ENCODE measurements at regions of chr2 and their contacts with region 1.

Region 1: GRCh38 chr2:132853128-132853527 is 183.1 kb upstream of the LYPD1 start:
- DNase-seq: no peak
- H3K4me3 ChIP-seq: no peak overlapping the region
- H3K27ac ChIP-seq: no peak overlapping the region
- H3K4me1 ChIP-seq: no peaks in the 10 kb centered on the region
- H3K27me3 ChIP-seq: no peaks in the 10 kb centered on the region
- CTCF ChIP-seq: no peak
- EP300 ChIP-seq: no peak
- POLR2A ChIP-seq: no peak

Region 2: GRCh38 chr2:132605236-132606180 is 247.6 kb before region 1 on chr2:
- in situ Hi-C with region 1: no loop called
- intact Hi-C with region 1: loop called (anchors 2 kb)
- DNase-seq: no peak
- H3K4me3 ChIP-seq: no peak overlapping the region
- H3K27ac ChIP-seq: no peak overlapping the region
- H3K4me1 ChIP-seq: no peaks in the 10 kb centered on the region
- H3K27me3 ChIP-seq: no peaks in the 10 kb centered on the region
- CTCF ChIP-seq: no peak
- EP300 ChIP-seq: no peak
- POLR2A ChIP-seq: no peak

Region 3: GRCh38 chr2:132871831-132872230 is 18.7 kb after region 1 on chr2:
- in situ Hi-C with region 1: no loop called
- intact Hi-C with region 1: loop called (anchors 1 kb)
- DNase-seq: no peak
- H3K4me3 ChIP-seq: no peak overlapping the region
- H3K27ac ChIP-seq: no peak overlapping the region
- H3K4me1 ChIP-seq: no peaks in the 10 kb centered on the region
- H3K27me3 ChIP-seq: no peaks in the 10 kb centered on the region
- CTCF ChIP-seq: no peak
- EP300 ChIP-seq: no peak
- POLR2A ChIP-seq: no peak

Region 4: DNA sequence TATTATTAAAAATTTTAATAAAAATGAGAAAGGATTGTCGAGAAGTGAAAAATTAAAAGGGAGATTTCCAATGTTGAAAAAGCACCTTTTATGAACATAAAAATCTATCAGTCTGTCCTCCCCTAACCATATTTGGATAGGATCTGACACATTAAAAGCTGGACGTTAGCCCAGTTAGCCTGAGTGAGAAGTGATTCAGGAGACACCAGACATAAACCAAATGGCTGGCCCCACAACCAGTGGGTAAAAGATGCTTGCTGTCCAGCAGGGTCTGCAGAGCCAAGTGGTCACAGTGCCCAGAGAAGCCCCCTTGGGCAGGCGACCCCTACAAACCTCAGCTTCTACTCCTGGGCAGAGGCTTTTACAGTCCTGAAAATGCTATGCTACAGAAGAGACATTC is 70.7 kb after region 1 on chr2:
- in situ Hi-C with region 1: no loop called
- intact Hi-C with region 1: no loop called
- DNase-seq: no peak
- H3K4me3 ChIP-seq: no peak overlapping the region
- H3K27ac ChIP-seq: no peak overlapping the region
- H3K4me1 ChIP-seq: no peaks in the 10 kb centered on the region
- H3K27me3 ChIP-seq: no peaks in the 10 kb centered on the region
- CTCF ChIP-seq: no peak
- EP300 ChIP-seq: no peak
- POLR2A ChIP-seq: no peak

Region 5: DNA sequence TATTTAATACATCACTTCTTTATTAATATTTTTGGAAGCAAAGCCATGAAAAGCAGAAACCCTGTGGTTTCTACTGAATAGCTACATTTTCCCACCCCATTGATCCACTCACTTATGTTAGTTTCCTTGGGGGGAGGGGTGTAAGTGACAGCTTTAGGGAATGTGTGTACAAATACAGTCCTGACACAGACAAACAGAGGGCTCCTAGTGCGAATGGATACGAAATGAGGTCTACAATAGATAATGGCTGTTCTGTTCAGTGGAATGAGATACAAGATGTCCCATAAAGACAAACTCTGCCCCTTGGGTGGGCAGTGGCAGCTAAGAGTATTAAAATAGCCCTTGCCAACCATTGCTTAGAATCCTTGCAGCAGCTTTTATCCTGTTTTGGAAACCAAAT is 402.2 kb after region 1 on chr2:
- in situ Hi-C with region 1: no loop called
- intact Hi-C with region 1: no loop called
- DNase-seq: no peak
- H3K4me3 ChIP-seq: no peak overlapping the region
- H3K27ac ChIP-seq: no peak overlapping the region
- H3K4me1 ChIP-seq: no peaks in the 10 kb centered on the region
- H3K27me3 ChIP-seq: no peaks in the 10 kb centered on the region
- CTCF ChIP-seq: no peak
- EP300 ChIP-seq: no peak
- POLR2A ChIP-seq: no peak

Measured in transverse colon (tissue), 4 donors.